Pancreas (tissue), 10 donors: ENCODE measurements at regions of chr1 and their contacts with region 1.

Region 1: GRCh38 chr1:208024406-208024805 is 113.5 kb upstream of the CD34 start:
- DNase-seq: no peak
- ATAC-seq: no peak
- H3K4me3 ChIP-seq: no peak overlapping the region
- H3K27ac ChIP-seq: no peak overlapping the region
- H3K4me1 ChIP-seq: no peaks in the 10 kb centered on the region
- H3K27me3 ChIP-seq: no peaks in the 10 kb centered on the region
- CTCF ChIP-seq: no peak

Region 2: DNA sequence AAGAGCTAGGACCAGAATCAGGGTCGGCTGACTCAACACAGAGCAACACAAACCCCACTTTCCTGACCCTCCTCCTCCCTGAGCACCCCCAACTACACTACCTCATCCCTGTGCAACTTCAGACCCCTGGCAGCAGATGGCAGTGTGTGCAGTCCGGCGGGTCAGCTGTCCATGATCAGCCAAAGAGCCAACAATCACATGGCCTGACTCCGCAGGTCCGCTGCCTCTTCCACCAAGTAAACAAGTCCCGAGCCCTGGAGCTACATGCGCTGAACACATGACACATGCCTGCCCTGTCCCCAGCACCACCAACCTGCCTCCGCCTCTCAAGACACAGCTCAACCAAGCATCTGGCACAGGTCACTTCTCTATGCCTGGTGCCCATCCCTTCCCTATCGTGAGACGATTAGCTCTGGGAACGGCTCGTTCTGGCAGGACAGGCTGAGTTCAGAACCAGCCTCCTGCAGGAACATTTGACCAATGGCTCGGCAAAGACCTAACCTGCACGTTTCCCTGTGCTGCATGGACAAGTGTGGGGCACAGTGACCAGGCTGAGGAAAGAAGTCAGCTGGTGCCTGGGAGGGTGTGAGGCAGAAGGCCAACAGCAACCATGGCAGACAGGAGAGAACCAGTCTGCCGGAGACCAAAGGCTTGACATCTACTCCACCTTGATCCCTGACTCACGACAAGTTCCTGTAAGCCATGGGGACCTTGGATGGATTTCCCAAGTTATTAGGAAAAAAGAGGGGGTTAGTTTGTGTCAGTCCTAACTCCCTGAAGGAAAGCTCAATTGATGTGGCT is 212.3 kb before region 1 on chr1:
- intact Hi-C with region 1: no loop called
- DNase-seq: peak in 5 of 6 donors; percentile 78 to 89 (median 84)
- ATAC-seq: peak; percentile 71 to 75 (median 73)
- H3K4me3 ChIP-seq: no peak overlapping the region
- H3K27ac ChIP-seq: peak overlapping the region in 3 of 4 donors; percentile 39 to 61 (median 60)
- H3K4me1 ChIP-seq: peaks cover 60 to 65% (median 62%) of the 10 kb centered on the region in 3 donors
- H3K27me3 ChIP-seq: no peaks in the 10 kb centered on the region
- CTCF ChIP-seq: peak in 3 of 4 donors; percentile 25 to 31 (median 25)

Region 3: DNA sequence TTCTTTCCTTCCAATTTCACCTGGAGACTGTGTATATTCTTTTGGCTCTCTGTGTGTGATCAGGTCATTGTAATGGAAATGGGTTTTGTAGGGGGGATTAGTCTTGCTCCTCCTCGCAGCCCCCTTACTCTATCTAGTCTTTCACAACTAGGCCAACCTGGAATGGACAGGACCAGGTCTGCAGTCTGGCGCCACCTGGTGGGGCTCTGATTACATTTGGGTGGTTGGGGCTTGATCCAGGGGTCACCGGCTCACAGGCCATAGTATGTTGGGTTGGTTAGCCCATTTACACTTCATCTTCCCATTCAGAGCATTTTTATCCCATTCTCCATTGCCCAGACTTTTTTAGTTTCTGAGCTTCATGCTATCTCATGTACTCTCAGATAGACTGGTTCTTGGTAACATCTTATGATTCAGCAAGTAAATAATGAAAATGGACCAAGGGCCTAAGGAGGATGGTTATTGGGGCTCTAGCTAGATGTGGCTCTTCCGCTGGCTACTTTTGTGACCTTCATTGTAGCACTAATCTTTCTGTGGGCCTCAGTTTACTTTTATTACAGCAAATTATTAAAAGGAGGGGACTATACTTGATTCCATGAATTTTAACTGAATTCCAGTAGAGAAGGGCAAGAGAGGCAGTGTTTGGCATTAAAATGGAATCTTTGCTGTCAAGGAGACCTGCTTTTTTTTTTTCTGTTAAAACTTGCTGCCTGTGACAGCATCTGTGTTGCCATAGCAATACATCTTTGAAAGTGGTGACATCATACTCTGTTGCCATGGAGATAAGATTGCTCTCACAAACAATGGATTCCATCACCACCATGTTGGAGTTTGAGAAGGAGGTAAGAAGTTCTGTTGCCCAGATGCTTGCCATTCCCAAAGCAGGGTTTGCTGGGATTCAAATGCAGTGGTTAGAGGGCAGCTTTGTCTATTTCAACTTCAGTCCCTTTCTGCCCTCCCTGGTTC is 69.6 kb after region 1 on chr1:
- intact Hi-C with region 1: loop called in 2 of 3 experiments (anchors 5 kb)
- DNase-seq: peak in 5 of 6 donors; percentile 40 to 85 (median 62)
- ATAC-seq: peak; percentile 52 to 87 (median 82)
- H3K4me3 ChIP-seq: no peak overlapping the region
- H3K27ac ChIP-seq: no peak overlapping the region
- H3K4me1 ChIP-seq: no peaks in the 10 kb centered on the region
- H3K27me3 ChIP-seq: no peaks in the 10 kb centered on the region
- CTCF ChIP-seq: peak; percentile 50 to 71 (median 65)

Region 4: DNA sequence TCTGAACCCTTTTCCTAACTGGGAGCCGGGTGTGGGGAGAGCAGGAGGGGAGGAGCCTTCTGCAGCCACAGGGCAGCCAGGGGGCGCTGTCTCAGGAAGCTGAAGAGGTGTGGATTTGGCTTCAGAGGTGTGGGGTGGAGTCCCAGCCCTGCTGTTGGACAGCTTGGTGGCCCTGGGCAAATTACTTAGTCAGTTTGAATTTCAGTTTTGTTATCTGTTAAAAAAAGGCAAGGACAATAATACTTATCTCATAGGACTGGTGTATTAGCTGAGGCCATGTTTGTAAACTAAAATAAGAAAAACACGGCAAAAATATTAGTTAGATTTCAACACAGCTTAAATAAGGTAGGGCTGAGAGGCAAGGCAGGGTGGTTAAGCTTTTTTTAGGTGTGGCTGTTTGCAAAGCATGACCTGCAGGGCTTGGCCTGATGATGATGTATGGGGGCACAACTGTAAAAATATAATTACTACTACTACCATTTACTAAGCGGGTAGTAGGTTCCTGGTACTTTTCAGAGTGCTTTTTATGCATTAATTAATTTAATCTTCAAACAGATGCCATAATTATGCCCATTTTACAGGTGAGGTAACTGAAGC is 108.0 kb after region 1 on chr1:
- intact Hi-C with region 1: no loop called
- DNase-seq: peak; percentile 74 to 92 (median 84)
- ATAC-seq: peak; percentile 87 to 96 (median 94)
- H3K4me3 ChIP-seq: no peak overlapping the region
- H3K27ac ChIP-seq: peak overlapping the region in 1 of 4 donors; percentile 8
- H3K4me1 ChIP-seq: peaks cover 0 to 9% (median 0%) of the 10 kb centered on the region in 3 donors
- H3K27me3 ChIP-seq: no peaks in the 10 kb centered on the region
- CTCF ChIP-seq: peak; percentile 80 to 83 (median 82)